Activated T-helper 2 cell treated with anti-CD3 and anti-CD28 coated beads, Interferon-gamma antibody, Interleukin-2, Interleukin-4, amounts not matched to agents 10 μg/mL and 5 μg/mL and 100 μg/mL, durations not matched to agents 14 hours and 24 hours and 36 hours (primary cell): ENCODE measurements at regions of chr7 and their contacts with region 1.

Region 1: GRCh38 chr7:36677769-36678437 is 46.4 kb downstream of the AOAH start:
- DNase-seq: peak; percentile 37
- H3K4me3 Mint-ChIP-seq: peak overlapping the region; percentile 64
- H3K27ac Mint-ChIP-seq: peak overlapping the region; percentile 87
- H3K4me1 Mint-ChIP-seq: peaks cover 65% of the 10 kb centered on the region
- H3K27me3 Mint-ChIP-seq: no peaks in the 10 kb centered on the region

Region 2: DNA sequence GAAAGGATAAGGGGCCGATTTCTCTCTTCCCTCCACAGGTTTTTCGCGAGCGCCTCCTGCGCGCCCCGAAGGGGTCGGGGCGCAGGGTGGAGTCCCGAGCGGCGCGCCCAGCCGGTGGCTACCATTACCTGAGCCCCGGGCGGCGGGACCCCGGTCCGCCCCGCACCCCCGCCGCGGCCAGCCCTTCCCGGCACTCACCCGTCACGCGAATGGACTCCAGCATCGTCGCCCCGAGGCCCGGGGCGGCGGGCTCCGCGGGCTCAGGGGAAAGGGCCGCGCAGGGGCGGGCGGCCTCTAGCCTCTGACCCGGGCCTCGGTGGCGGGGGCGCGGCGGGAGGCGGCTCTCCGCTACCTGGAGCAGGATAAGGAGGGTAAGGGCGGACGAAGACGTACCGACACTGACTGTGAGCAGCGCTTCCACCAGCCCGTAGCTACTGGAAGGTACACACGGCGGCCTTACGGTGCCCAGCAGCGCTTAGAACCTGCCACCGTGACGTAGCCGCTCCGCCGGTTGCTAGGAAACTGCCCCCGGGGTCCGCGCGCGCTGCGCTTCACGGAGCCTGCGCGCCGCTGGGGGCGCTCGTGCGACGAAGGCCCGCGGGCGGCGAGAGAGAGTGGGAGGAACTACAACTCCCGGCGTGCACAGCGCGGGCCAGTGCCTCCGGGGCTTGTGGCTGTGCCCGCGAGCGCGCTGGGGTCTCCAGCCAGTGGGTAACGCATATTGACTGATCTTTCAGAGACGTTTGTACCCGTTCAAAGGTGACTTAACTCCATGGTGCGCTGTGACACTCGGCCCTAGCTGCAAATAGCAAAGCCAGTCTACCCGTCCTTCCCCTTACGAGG is 311.0 kb before region 1 on chr7:
- intact Hi-C with region 1: no loop called
- DNase-seq: peak; percentile 87
- H3K4me3 Mint-ChIP-seq: peak overlapping the region; percentile 84
- H3K27ac Mint-ChIP-seq: no peak overlapping the region
- H3K4me1 Mint-ChIP-seq: peaks cover 11% of the 10 kb centered on the region
- H3K27me3 Mint-ChIP-seq: peaks cover 39% of the 10 kb centered on the region

Region 3: GRCh38 chr7:36526863-36527548 is 150.9 kb before region 1 on chr7:
- intact Hi-C with region 1: loop called (anchors 5 kb)
- DNase-seq: no peak
- H3K4me3 Mint-ChIP-seq: peak overlapping the region; percentile 26
- H3K27ac Mint-ChIP-seq: peak overlapping the region; percentile 74
- H3K4me1 Mint-ChIP-seq: peaks cover 29% of the 10 kb centered on the region
- H3K27me3 Mint-ChIP-seq: no peaks in the 10 kb centered on the region

Region 4: GRCh38 chr7:36692456-36692855 is 14.6 kb after region 1 on chr7:
- intact Hi-C with region 1: loop called (anchors 2 kb)
- DNase-seq: no peak
- H3K4me3 Mint-ChIP-seq: peak overlapping the region; percentile 87
- H3K27ac Mint-ChIP-seq: peak overlapping the region; percentile 99
- H3K4me1 Mint-ChIP-seq: peaks cover 59% of the 10 kb centered on the region
- H3K27me3 Mint-ChIP-seq: no peaks in the 10 kb centered on the region

Region 5: DNA sequence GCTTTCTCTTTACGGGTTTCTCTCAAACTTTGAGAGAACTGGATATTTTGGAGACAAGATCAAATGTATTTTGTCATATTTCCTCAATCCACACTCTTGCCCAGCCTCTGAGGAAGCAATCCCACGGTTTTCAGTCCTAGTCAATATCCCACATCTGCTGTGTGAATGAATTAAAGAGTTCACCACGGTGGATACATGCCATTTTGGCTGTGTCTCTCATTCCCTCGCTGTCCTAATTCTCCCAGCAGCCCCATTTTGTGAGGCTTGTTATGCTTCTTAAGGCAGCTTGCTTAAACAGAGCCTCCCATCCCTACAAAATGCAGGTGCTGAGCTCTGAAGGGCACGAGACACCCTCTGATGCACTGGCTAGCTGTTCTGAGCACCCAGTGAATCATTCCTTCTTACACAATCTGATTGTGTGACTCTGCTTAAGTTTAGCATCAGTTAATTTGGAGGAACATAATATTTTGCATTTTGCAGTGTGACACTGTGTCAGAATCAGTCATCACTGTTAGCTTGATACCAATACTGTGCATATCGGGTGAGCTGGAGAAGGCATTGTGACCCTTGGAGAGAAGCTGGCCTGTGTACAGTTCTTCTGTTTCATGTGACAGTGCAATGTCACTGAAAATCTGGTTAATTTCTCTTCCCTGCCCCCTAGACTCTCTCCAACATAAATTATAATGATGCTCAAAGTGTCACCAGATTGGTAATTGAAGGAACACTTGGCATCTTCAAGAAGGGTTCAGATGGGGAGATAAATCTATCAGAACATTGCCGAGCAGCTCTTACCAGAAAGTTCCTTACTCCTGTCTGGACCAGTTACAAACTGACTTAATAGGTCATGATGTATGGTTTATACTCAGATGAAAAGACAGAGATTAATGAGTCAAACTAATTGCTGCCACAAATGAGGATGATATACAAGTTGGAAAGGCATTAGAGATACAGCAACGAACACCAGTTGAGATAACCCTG is 150.1 kb after region 1 on chr7:
- intact Hi-C with region 1: no loop called
- DNase-seq: no peak
- H3K4me3 Mint-ChIP-seq: no peak overlapping the region
- H3K27ac Mint-ChIP-seq: no peak overlapping the region
- H3K4me1 Mint-ChIP-seq: no peaks in the 10 kb centered on the region
- H3K27me3 Mint-ChIP-seq: peaks cover 1% of the 10 kb centered on the region